Naive thymus-derived CD8-positive, alpha-beta T cell (primary cell): ENCODE measurements at regions of chr11 and their contacts with region 1.

Region 1: DNA sequence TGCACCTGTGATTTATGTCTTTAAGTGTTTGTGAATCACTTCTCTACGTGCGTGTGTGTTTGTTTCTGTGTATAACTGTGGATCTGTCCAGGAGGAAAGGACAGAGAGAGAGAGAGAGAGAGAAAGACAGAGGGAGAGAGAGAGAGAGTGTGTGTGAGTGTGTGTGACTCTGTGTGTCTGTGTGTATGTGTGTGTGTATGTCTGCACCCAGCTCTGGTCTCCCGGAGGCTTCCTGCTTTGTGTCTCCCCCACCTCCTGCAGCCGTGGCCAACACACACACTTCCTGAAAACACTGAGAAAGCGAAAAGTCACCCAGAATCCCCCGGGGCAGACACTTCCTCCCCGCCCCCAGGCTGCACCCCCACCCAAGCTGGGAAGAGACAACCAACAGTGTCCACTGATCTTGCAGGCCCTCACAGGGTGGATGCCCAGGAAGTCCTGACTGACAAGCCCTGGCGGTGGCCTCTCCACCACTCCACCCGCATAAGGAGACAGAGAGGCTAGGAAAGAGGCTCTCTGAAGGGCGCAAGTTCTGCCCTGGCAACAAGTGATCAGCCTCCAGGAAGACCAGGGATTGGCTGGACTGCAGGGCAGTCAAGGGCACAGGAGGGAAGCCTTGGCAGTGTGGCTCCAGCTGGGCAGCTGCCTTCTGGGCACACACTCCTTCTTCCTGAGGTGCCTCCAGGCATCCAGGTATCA is 30.0 kb downstream of the ARAP1 start:
- DNase-seq: peak; percentile 70 to 96 (median 84)
- ATAC-seq: peak; percentile 85 to 87
- H3K4me3 Mint-ChIP-seq: peak overlapping the region; percentile 87 to 99 (median 96)
- H3K27ac Mint-ChIP-seq: peak overlapping the region; percentile 92 to 99 (median 97)
- H3K4me1 Mint-ChIP-seq: peaks cover 38 to 83% (median 65%) of the 10 kb centered on the region in 4 donors
- H3K27me3 Mint-ChIP-seq: peaks cover 0 to 1% (median 0%) of the 10 kb centered on the region in 5 donors

Region 2: DNA sequence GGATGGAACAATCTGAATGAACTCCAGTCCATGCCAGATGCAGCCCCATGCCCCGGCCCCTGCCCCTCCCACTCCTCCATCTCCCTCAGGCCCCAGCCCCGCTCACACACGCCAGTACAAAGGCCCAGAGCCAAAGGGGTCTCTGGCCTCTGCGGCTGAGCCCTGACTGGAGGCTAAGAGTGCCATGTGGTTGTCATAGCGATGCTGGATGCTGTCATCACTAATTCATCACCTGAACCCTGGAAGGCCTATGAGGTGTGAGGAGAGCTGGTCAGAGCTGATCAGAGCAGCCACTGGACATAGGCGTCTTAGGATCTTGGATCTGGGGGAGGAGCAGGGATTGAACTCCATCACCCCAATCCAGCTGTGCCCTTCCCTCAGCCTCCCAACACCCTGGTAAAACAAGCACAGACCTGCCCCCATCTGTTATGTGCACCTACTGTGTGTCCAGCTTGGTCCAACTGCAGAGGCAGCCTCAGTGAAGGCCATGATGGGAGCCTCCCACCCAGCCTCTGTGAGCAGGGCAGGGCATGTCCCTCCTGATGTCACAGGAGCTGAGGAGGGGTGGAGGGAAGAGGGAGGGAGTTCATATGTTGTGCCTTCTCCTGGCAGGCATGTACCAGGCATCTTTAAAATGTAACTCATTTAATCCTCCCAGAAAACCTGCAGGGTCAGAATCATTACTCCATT is 64.6 kb before region 1 on chr11:
- POLR2A ChIA-PET with region 1: no interaction called
- DNase-seq: no peak
- ATAC-seq: no peak
- H3K4me3 Mint-ChIP-seq: no peak overlapping the region
- H3K27ac Mint-ChIP-seq: no peak overlapping the region
- H3K4me1 Mint-ChIP-seq: peaks cover 0 to 2% (median 0%) of the 10 kb centered on the region in 4 donors
- H3K27me3 Mint-ChIP-seq: peaks cover 4 to 25% (median 15%) of the 10 kb centered on the region in 5 donors

Region 3: GRCh38 chr11:72736452-72737069 is 14.4 kb after region 1 on chr11:
- POLR2A ChIA-PET with region 1: interaction called, 13 read pairs
- DNase-seq: peak; percentile 32 to 89 (median 80)
- ATAC-seq: peak; percentile 83 to 94
- H3K4me3 Mint-ChIP-seq: peak overlapping the region; percentile 26 to 87 (median 78)
- H3K27ac Mint-ChIP-seq: peak overlapping the region; percentile 96 to 99 (median 99)
- H3K4me1 Mint-ChIP-seq: peaks cover 41 to 83% (median 61%) of the 10 kb centered on the region in 4 donors
- H3K27me3 Mint-ChIP-seq: no peaks in the 10 kb centered on the region

Region 4: DNA sequence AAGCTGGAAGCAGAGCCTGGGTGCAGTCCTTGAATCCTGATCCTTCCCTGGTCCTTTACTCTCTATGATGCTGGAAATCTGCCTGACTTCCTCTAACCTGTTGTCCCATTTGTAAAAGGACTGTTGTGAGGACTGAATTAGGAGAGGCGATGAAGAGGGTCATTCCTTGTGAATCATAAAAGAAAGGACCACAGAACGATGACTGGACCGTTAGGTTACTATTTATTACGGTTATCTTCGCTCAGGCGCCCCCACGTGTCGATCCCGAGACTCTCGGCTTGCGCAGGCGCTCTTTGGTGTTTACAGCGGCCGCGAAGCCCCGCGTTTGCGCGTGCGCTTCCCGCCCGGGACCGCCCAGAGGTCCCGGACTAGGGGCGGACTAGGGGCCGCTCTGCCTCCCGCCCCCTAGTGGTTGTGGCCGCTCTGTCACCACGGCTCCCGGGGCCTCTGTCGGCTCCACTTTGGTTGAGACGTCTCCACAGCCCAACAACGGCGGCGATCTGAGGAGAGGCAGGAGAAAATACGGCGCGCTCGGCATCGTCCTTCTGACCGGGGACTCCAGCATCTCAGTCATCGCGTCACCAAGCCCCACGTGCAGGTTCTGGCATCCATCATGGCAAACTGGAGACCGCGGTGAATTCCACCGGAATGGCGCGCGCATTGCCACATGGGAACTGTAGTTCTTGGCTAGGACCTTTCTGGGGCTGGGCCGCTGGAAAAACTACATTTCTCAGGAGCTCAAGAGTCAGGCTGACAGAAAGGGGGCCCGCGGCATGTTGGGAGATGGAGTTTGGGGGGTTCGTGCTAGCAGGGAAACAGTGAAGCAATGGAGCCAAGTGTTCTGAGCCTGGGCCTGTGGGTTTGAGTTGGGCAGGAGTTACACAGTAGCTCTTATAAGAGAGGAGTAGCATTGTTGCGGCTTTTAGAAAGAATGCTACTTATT is 71.5 kb after region 1 on chr11 and contains the start of gene STARD10:
- POLR2A ChIA-PET with region 1: interaction called, 32 read pairs
- DNase-seq: peak; percentile 87 to 99 (median 96)
- ATAC-seq: peak; percentile 91
- H3K4me3 Mint-ChIP-seq: peak within 1 kb of the TSS; percentile 92 to 100 (median 98)
- H3K27ac Mint-ChIP-seq: peak within 1 kb of the TSS; percentile 99 to 100 (median 100)
- H3K4me1 Mint-ChIP-seq: peaks cover 9 to 36% (median 29%) of the 10 kb centered on the region in 4 donors
- H3K27me3 Mint-ChIP-seq: no peaks in the 10 kb centered on the region
- polyA plus RNA-seq, gene STARD10: 13.5 to 16.3 (median 14.9) TPM

Region 5: GRCh38 chr11:72814286-72815109 is 92.3 kb after region 1 on chr11 and contains the start of gene ATG16L2:
- POLR2A ChIA-PET with region 1: interaction called, 49 read pairs
- DNase-seq: peak; percentile 78 to 93 (median 89)
- ATAC-seq: peak; percentile 83 to 85
- H3K4me3 Mint-ChIP-seq: peak within 1 kb of the TSS; percentile 95 to 99 (median 98)
- H3K27ac Mint-ChIP-seq: peak within 1 kb of the TSS; percentile 93 to 99 (median 98)
- H3K4me1 Mint-ChIP-seq: peaks cover 33 to 64% (median 54%) of the 10 kb centered on the region in 4 donors
- H3K27me3 Mint-ChIP-seq: no peaks in the 10 kb centered on the region
- polyA plus RNA-seq, gene ATG16L2: 9.9 to 12.1 (median 11.6) TPM